A673 (cell line): ENCODE measurements at regions of chr15 and their contacts with region 1.

Region 1: GRCh38 chr15:70097337-70098169 is at the start of gene TLE3:
- DNase-seq: peak; percentile 99
- H3K4me3 ChIP-seq: peak within 1 kb of the TSS; percentile 76
- H3K27ac ChIP-seq: peak within 1 kb of the TSS; percentile 97
- H3K4me1 ChIP-seq: peaks cover 48% of the 10 kb centered on the region
- H3K27me3 ChIP-seq: no peaks in the 10 kb centered on the region
- CTCF ChIP-seq: peak; percentile 40; the same call in 1 of the 2 replicates
- total RNA-seq, gene TLE3: 90.4 and 98.1 TPM in 2 replicates

Region 2: GRCh38 chr15:70023064-70023768 is 74.3 kb before region 1 on chr15:
- CTCF ChIA-PET with region 1: interaction called, 3 read pairs
- POLR2A ChIA-PET with region 1: no interaction called
- intact Hi-C with region 1: loop called (anchors 5 kb)
- DNase-seq: peak; percentile 54
- H3K4me3 ChIP-seq: no peak overlapping the region
- H3K27ac ChIP-seq: peak overlapping the region; percentile 61
- H3K4me1 ChIP-seq: peaks cover 23% of the 10 kb centered on the region
- H3K27me3 ChIP-seq: no peaks in the 10 kb centered on the region
- CTCF ChIP-seq: no peak

Region 3: DNA sequence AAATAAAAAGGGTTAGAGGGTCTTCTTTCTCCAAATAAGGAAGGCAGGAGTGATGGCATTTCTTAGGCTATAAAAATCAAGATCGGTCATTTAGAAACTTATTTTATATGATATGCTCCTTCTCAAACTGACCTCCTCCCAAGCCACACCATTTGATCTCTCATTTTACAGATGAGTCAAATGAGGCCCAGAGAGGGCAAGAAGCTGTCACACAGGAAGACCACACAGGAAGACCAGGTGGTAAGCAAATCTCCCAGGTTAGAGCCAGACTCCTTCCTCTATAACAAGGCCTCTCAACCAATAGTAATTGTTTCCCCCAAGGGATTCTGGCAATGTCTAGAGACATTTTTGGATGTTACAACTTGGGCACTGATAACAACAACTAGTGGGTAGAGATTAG is 13.6 kb before region 1 on chr15:
- CTCF ChIA-PET with region 1: no interaction called
- POLR2A ChIA-PET with region 1: interaction called, 11 read pairs
- intact Hi-C with region 1: no loop called
- DNase-seq: no peak
- H3K4me3 ChIP-seq: no peak overlapping the region
- H3K27ac ChIP-seq: no peak overlapping the region
- H3K4me1 ChIP-seq: peaks cover 23% of the 10 kb centered on the region
- H3K27me3 ChIP-seq: no peaks in the 10 kb centered on the region
- CTCF ChIP-seq: no peak

Region 4: GRCh38 chr15:70196314-70197291 is 99.0 kb after region 1 on chr15:
- CTCF ChIA-PET with region 1: no interaction called
- POLR2A ChIA-PET with region 1: interaction called, 5 read pairs
- intact Hi-C with region 1: loop called (anchors 5 kb)
- DNase-seq: peak; percentile 98
- H3K4me3 ChIP-seq: no peak overlapping the region
- H3K27ac ChIP-seq: peak overlapping the region; percentile 89
- H3K4me1 ChIP-seq: peaks cover 56% of the 10 kb centered on the region
- H3K27me3 ChIP-seq: no peaks in the 10 kb centered on the region
- CTCF ChIP-seq: no peak